ENCODE measurements at regions of chr21 and their contacts with region 1.

Region 1: GRCh38 chr21:34745557-34746255 is 76.9 kb downstream of the CLIC6 start:
- DNase-seq: peak; percentile 53 to 70 (median 65)
- H3K4me3 ChIP-seq: no peak overlapping the region
- H3K27ac ChIP-seq: no peak overlapping the region
- H3K4me1 ChIP-seq: no peaks in the 10 kb centered on the region
- H3K27me3 ChIP-seq: peaks cover 2% of the 10 kb centered on the region
- CTCF ChIP-seq: peak; percentile 66 to 87 (median 82)
- EP300 ChIP-seq: no peak
- POLR2A ChIP-seq: no peak

Region 2: GRCh38 chr21:34642211-34643075 is 103.3 kb before region 1 on chr21:
- intact Hi-C with region 1: no loop called
- DNase-seq: no peak
- H3K4me3 ChIP-seq: no peak overlapping the region
- H3K27ac ChIP-seq: no peak overlapping the region
- H3K4me1 ChIP-seq: no peaks in the 10 kb centered on the region
- H3K27me3 ChIP-seq: no peaks in the 10 kb centered on the region
- CTCF ChIP-seq: no peak
- EP300 ChIP-seq: no peak
- POLR2A ChIP-seq: no peak

Region 3: DNA sequence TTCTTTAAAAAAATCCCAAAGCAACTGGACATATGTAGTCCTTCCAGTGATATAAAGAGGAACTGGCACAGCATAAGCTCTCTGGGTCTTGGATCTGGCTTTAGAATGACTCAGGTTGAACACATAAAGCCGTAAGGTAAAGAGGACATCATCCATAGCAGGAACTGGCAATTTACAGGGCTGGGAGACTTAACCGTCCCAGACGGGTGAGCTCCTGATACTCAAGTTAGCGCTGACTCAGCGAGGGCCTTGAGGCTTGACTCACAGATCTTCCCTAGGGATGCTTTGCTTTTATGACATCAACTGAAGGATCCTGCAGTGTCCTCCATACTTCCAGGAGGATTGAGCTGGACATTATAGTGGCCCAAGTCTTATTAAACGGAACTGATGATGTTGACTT is 77.2 kb after region 1 on chr21:
- intact Hi-C with region 1: no loop called
- DNase-seq: no peak
- H3K4me3 ChIP-seq: no peak overlapping the region
- H3K27ac ChIP-seq: no peak overlapping the region
- H3K4me1 ChIP-seq: peaks cover 4% of the 10 kb centered on the region
- H3K27me3 ChIP-seq: no peaks in the 10 kb centered on the region
- CTCF ChIP-seq: no peak
- EP300 ChIP-seq: no peak
- POLR2A ChIP-seq: no peak

Region 4: DNA sequence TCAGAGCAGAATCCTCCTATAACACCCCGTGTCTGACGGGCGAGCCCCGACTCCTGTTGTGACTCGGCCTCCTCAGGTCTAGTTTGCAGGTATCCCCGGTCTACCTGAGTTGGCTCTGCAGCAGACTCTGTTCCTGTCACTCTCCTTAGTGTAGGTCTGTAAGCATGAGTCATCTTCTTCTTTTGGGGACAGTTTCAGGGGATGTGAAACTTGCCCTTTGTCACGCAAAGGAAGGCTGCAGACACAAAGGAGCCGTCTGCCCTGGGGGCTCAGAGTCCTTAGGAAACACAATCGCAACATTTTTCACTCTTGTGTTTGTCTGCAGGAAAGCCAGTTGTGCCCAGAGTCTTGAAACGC is 120.2 kb after region 1 on chr21:
- intact Hi-C with region 1: no loop called
- DNase-seq: no peak
- H3K4me3 ChIP-seq: no peak overlapping the region
- H3K27ac ChIP-seq: no peak overlapping the region
- H3K4me1 ChIP-seq: no peaks in the 10 kb centered on the region
- H3K27me3 ChIP-seq: no peaks in the 10 kb centered on the region
- CTCF ChIP-seq: no peak
- EP300 ChIP-seq: no peak
- POLR2A ChIP-seq: no peak

Region 5: DNA sequence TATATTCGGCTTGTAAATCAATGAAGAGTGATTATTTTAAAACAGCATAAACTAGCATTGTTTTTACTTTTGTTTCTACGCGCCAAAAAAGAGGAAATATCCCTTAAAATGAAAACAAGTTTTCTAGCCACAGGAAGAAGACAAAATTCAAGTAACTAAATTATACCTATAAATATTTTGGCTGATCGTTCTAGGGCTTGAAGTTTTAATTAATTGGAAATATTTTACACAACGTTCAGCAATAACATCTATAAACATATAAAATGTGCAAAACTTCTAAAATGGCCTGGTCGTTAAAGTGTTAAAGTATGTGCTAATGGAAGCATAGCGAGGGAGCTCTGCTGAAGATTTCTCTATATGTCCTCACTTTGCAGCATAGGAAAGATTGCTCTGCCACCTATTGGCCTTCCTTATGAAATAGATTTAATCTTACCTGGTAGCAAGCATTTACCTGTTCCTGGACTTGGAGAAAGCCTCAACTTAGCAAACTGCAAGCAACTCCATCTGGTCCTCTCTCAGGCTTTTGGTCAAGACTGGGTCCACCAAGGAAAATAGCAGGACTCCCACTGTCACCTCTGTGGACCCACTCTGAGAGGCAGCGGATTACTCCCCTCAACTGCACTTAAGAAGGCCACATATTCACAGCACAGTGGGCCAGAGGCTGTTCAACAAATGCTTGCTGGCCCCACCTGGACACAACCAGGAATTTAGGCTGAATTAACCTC is 654.7 kb after region 1 on chr21:
- intact Hi-C with region 1: loop called in 1 of 4 experiments (anchors 10 kb)
- DNase-seq: no peak
- H3K4me3 ChIP-seq: no peak overlapping the region
- H3K27ac ChIP-seq: no peak overlapping the region
- H3K4me1 ChIP-seq: no peaks in the 10 kb centered on the region
- H3K27me3 ChIP-seq: no peaks in the 10 kb centered on the region
- CTCF ChIP-seq: peak in 2 of 3 donors; percentile 26 to 29
- EP300 ChIP-seq: no peak
- POLR2A ChIP-seq: no peak

Region 6: GRCh38 chr21:35940074-35940927 is 1194.6 kb after region 1 on chr21:
- intact Hi-C with region 1: loop called in 2 of 4 experiments (anchors 5 to 10 kb)
- DNase-seq: peak; percentile 24 to 45 (median 38)
- H3K4me3 ChIP-seq: no peak overlapping the region
- H3K27ac ChIP-seq: no peak overlapping the region
- H3K4me1 ChIP-seq: no peaks in the 10 kb centered on the region
- H3K27me3 ChIP-seq: no peaks in the 10 kb centered on the region
- CTCF ChIP-seq: peak in 2 of 3 donors; percentile 35 to 67
- EP300 ChIP-seq: no peak
- POLR2A ChIP-seq: no peak

Region 7: DNA sequence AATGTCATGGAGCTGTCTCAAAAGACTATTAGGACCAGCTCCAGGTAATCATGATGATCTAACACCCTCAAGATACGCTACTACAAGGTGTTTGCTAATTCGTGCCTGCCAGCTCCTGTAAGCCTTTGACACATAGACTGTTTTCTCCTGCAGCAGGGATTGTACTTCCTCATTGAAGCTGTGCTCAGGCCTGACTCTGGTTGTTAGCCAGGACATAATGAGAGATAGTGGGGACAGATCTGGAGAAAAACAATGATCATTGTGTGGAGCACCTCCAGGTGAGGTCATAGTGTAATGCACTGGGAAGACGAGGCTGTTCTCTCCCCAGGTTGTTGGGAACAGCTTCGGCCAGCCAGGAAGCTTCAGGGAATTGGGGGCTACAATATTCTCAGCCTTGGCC is 1220.0 kb after region 1 on chr21:
- intact Hi-C with region 1: no loop called
- DNase-seq: no peak
- H3K4me3 ChIP-seq: no peak overlapping the region
- H3K27ac ChIP-seq: no peak overlapping the region
- H3K4me1 ChIP-seq: no peaks in the 10 kb centered on the region
- H3K27me3 ChIP-seq: no peaks in the 10 kb centered on the region
- CTCF ChIP-seq: no peak
- EP300 ChIP-seq: no peak
- POLR2A ChIP-seq: no peak

Region 8: DNA sequence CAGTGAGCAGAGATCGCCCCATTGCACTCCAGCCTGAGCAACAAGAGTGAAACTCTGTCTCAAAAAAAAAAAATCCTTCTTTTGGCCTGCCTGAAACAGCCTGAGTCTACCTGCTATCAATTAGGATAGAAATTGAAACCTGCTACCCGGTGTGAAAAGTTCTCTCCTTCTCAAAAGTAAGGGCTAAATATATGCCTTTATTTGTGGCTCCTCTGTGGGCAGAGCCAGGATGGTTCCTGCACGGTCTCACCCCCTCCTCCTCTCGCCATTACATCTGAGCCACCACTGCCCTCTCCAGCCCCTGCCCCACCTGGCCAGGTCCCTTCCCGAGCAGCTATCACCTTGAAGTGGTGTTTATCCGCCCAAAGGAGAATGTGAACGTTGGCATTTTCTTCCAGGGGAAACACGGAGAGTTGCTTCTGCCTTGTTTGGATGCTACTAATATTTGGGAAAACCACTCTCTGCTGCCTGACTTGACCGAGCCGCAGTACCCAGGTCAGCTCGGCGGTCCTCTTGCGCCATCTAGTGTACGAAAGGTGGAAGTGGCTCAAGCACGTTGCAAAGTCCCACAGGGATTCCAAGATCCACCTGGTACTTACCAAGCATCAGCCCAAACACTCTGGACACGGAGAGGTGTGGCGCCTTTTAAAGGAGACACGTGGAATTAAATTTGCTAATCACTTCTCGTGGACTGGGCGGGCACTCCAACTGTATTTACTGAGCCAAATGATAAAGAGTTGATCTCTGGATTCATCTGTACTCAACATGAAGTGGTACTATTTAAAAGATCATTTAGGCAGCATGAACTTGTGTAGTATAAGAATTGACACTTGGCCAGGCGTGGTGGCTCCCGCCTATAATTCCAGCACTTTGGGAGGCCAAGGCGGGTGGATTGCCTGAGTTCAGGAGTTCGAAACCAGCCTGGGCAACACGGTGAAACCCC is 1282.7 kb after region 1 on chr21:
- intact Hi-C with region 1: loop called in 2 of 4 experiments (anchors 5 to 10 kb)
- DNase-seq: peak; percentile 64 to 81 (median 79)
- H3K4me3 ChIP-seq: no peak overlapping the region
- H3K27ac ChIP-seq: no peak overlapping the region
- H3K4me1 ChIP-seq: peaks cover 1% of the 10 kb centered on the region
- H3K27me3 ChIP-seq: no peaks in the 10 kb centered on the region
- CTCF ChIP-seq: peak; percentile 82 to 85 (median 83)
- EP300 ChIP-seq: no peak
- POLR2A ChIP-seq: no peak